CD4-positive, alpha-beta memory T cell (primary cell): ENCODE measurements at regions of chr1 and their contacts with region 1.

Region 1: DNA sequence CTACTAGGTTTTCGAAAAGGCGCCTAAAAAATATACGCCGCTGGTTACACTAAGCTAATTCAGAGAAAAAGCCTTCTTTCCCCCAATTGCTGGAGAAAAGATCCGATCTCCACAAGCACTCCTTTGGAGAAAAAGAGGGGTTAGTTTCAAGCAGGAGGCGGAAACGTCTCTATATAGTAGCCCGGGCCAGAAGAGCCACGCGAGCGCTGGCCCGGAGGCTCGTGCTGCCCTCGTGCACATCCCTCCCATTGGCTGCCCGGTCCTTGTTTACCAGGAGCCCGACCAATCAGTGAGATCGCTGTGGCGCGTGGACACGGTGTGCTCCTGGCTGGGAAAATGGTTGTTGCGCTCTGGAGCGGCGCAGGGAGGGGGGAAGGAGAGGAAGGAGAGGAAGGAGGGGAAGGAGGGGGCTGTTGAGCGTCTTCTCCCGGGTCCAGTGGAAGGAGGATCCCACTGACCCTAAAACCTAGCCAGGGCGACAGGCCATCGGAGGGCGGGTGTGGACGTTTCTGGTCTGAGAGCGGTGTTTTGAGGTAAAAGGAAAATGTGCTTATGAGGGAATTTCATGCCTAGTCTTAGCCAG is at the start of gene TXNIP:
- DNase-seq: peak; percentile 90 to 96 (median 94)
- H3K4me3 ChIP-seq: peak within 1 kb of the TSS; percentile 97 to 99
- H3K4me3 Mint-ChIP-seq: peak within 1 kb of the TSS; percentile 96 to 99 (median 98)
- H3K27ac ChIP-seq: peak within 1 kb of the TSS; percentile 75
- H3K27ac Mint-ChIP-seq: peak within 1 kb of the TSS; percentile 96 to 99 (median 97)
- H3K4me1 ChIP-seq: peaks cover 62% of the 10 kb centered on the region
- H3K4me1 Mint-ChIP-seq: peaks cover 39 to 89% (median 50%) of the 10 kb centered on the region in 4 donors
- H3K27me3 ChIP-seq: no peaks in the 10 kb centered on the region
- H3K27me3 Mint-ChIP-seq: no peaks in the 10 kb centered on the region
- total RNA-seq, gene TXNIP: 933 to 985 TPM

Region 2: GRCh38 chr1:145795257-145795881 is 201.2 kb before region 1 on chr1:
- CTCF ChIA-PET with region 1: no interaction called
- POLR2A ChIA-PET with region 1: no interaction called
- intact Hi-C with region 1: no loop called
- DNase-seq: peak in 1 of 5 donors; percentile 28
- H3K4me3 ChIP-seq: no peak overlapping the region
- H3K4me3 Mint-ChIP-seq: no peak overlapping the region
- H3K27ac ChIP-seq: no peak overlapping the region
- H3K27ac Mint-ChIP-seq: peak overlapping the region in 1 of 7 donors; percentile 13
- H3K4me1 ChIP-seq: no peaks in the 10 kb centered on the region
- H3K4me1 Mint-ChIP-seq: peaks cover 10 to 21% (median 20%) of the 10 kb centered on the region in 4 donors
- H3K27me3 ChIP-seq: no peaks in the 10 kb centered on the region
- H3K27me3 Mint-ChIP-seq: no peaks in the 10 kb centered on the region

Region 3: DNA sequence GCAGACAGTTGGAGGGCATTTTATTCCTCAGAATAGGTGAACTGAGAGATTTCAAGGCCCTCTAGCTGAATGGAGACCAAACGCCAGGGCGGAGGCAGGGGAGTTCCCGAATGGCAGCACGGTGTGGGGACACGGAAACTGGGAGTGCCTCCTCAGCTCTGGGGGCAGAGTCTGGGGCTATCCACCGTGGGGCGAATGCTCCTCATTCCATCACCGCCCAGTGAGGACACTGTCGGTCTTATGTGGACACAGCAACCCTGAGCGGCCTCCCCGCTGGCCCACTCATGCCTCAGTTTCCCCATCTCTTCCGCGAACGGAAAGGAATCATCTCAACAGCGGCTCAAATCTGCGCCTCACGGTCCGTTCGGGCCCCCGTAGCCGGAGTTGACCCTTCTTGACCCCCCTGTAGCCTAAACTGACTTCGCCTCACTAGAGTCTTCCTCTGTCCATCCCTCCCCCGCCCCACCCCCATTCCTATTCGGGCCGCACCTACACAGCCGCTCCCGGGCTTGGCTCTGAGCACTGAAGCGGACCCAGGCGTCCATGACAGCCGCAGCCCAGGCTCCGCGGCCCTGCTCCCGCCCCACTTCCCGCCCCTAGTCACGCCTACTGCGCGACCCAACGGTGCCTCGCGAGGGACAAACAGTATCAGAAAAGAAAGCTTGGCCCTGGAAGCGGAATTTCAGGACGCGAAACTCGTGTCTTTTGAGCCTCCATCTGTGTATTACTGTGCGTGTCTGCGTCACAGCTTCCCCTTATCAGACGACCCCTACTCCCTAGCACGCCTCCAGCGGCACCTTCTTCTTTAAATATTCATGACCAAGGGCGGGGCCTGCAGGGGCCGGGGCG is 78.2 kb before region 1 on chr1 and contains the start of gene PEX11B:
- CTCF ChIA-PET with region 1: no interaction called
- POLR2A ChIA-PET with region 1: interaction called, 22 read pairs
- intact Hi-C with region 1: loop called (anchors 1 kb)
- DNase-seq: peak; percentile 90 to 96 (median 92)
- H3K4me3 ChIP-seq: peak within 1 kb of the TSS; percentile 90 to 96
- H3K4me3 Mint-ChIP-seq: peak within 1 kb of the TSS; percentile 89 to 96 (median 92)
- H3K27ac ChIP-seq: peak within 1 kb of the TSS; percentile 79
- H3K27ac Mint-ChIP-seq: peak within 1 kb of the TSS; percentile 91 to 97 (median 95)
- H3K4me1 ChIP-seq: peaks cover 28% of the 10 kb centered on the region
- H3K4me1 Mint-ChIP-seq: peaks cover 24 to 45% (median 35%) of the 10 kb centered on the region in 4 donors
- H3K27me3 ChIP-seq: no peaks in the 10 kb centered on the region
- H3K27me3 Mint-ChIP-seq: no peaks in the 10 kb centered on the region
- total RNA-seq, gene PEX11B: 34.7 to 38.7 TPM

Region 4: DNA sequence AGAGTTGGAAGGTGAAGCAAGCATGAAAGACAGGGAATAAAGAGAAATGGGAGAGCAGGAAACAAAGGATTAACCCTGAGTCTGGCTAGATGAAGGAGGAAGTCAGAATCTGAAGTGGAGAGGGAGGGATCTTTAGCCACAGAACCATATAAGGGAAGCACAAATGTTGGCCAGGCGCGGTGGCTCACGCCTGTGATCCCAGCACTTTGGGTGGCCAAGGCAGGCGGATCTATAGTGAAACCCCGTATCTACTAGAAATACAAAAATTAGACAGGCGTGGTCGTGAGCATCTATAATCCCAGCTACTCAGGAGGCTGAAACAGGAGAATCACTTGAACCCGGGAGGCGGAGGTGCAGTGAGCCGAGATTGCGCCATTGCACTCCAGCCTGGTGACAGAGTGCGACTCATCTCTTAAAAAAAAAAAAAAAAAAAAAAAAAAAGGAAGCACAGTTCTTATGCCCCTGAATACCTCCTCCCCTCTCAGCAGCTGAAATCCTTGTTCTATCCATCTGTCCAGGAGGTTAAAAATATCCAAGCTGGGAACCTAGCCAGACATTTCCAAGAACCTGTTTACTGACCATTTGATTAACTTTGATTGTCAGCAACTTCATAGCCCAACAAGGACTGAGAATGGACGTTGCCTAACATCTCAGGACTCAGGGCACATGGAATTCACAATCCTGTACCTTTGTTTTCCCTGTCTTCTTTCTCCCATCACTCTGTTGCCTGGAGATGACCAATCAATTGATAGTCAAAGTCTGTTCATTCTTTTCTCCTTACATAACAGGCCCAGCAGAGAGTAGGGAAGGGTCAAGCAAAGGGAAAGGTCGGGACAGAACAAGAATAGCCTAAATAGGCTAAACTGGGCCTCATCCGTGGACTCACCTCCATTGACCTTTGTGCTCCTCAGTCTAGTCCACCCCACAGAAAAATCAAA is 10.8 kb before region 1 on chr1:
- CTCF ChIA-PET with region 1: interaction called, 447 read pairs
- POLR2A ChIA-PET with region 1: interaction called, 1,967 read pairs
- intact Hi-C with region 1: loop called (anchors 1 kb)
- DNase-seq: no peak
- H3K4me3 ChIP-seq: peak overlapping the region in 1 of 2 donors; percentile 15
- H3K4me3 Mint-ChIP-seq: peak overlapping the region; percentile 52 to 92 (median 76)
- H3K27ac ChIP-seq: no peak overlapping the region
- H3K27ac Mint-ChIP-seq: peak overlapping the region in 6 of 7 donors; percentile 88 to 94 (median 92)
- H3K4me1 ChIP-seq: peaks cover 85% of the 10 kb centered on the region
- H3K4me1 Mint-ChIP-seq: peaks cover 25 to 67% (median 43%) of the 10 kb centered on the region in 4 donors
- H3K27me3 ChIP-seq: no peaks in the 10 kb centered on the region
- H3K27me3 Mint-ChIP-seq: no peaks in the 10 kb centered on the region

Region 5: DNA sequence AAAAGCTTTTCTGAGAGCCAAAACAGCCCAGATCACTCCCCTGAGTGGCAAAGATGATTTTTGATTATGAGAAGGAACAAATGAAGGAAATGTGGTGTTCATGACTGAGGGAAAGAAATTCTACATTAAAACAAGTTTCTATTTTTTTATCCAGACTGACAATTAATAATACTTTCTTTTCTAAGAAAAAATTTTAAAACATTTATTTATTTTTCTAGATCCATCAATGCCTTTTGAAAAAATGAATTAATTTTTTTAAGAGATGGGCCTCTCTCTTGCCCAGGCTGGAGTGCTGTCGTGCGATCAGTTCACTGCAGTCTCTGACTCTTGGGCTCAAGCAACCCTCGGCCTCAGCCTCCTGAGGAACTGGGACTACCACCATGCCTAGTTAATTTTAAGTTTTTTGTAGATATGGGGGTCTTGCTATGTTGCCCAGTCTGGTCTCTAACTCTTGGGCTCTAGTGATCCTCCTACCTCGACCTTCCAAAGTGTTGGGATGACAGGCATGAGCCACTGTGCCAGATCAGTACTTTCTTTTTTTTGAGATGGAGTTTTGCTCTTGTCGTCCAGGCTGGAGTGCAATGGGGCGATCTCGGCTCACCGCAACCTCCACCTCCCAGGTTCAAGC is 11.1 kb after region 1 on chr1:
- CTCF ChIA-PET with region 1: interaction called, 168 read pairs
- POLR2A ChIA-PET with region 1: interaction called, 1,967 read pairs
- intact Hi-C with region 1: loop called (anchors 1 kb)
- DNase-seq: no peak
- H3K4me3 ChIP-seq: no peak overlapping the region
- H3K4me3 Mint-ChIP-seq: peak overlapping the region in 6 of 8 donors; percentile 79 to 87 (median 84)
- H3K27ac ChIP-seq: no peak overlapping the region
- H3K27ac Mint-ChIP-seq: peak overlapping the region; percentile 45 to 95 (median 88)
- H3K4me1 ChIP-seq: peaks cover 47% of the 10 kb centered on the region
- H3K4me1 Mint-ChIP-seq: peaks cover 24 to 54% (median 33%) of the 10 kb centered on the region in 4 donors
- H3K27me3 ChIP-seq: no peaks in the 10 kb centered on the region
- H3K27me3 Mint-ChIP-seq: no peaks in the 10 kb centered on the region

Region 6: GRCh38 chr1:146012737-146013403 is 16.3 kb after region 1 on chr1:
- CTCF ChIA-PET with region 1: interaction called, 168 read pairs
- POLR2A ChIA-PET with region 1: interaction called, 1,967 read pairs
- intact Hi-C with region 1: no loop called
- DNase-seq: peak; percentile 65 to 73 (median 69)
- H3K4me3 ChIP-seq: no peak overlapping the region
- H3K4me3 Mint-ChIP-seq: no peak overlapping the region
- H3K27ac ChIP-seq: no peak overlapping the region
- H3K27ac Mint-ChIP-seq: no peak overlapping the region
- H3K4me1 ChIP-seq: peaks cover under 1% of the 10 kb centered on the region
- H3K4me1 Mint-ChIP-seq: peaks cover 6 to 9% (median 7%) of the 10 kb centered on the region in 4 donors
- H3K27me3 ChIP-seq: no peaks in the 10 kb centered on the region
- H3K27me3 Mint-ChIP-seq: peaks cover 2 to 4% of the 10 kb centered on the region in 2 donors